Heart left ventricle (tissue), 16 donors: ENCODE measurements at regions of chr9 and their contacts with region 1.

Region 1: GRCh38 chr9:81609782-81610739 is 79.3 kb downstream of the TLE1 start:
- DNase-seq: no peak
- ATAC-seq: no peak
- H3K4me3 ChIP-seq: no peak overlapping the region
- H3K27ac ChIP-seq: peak overlapping the region in 1 of 12 donors; percentile 5
- H3K4me1 ChIP-seq: peaks cover 0 to 28% (median 11%) of the 10 kb centered on the region in 12 donors
- H3K27me3 ChIP-seq: no peaks in the 10 kb centered on the region
- CTCF ChIP-seq: no peak
- POLR2A ChIP-seq: no peak

Region 2: DNA sequence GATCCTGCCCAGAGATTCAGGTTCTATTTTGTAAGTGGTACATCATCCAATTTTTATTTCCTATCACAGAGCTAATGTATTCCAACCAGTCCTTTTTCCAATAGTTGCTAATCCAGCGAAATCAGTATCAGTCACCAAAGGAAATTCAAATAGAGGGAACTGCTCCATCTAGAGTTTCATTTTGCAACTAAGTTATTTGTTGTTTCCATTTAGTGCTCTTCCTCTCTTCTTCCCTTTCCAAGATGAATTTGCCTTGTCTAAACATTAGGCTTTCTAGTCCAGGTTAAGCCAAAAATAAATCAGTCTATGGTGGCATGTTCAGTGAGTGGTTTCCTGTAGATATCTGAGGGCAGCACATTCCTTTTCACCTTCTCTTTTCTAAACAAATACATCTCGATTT is 238.4 kb after region 1 on chr9:
- intact Hi-C with region 1: no loop called
- DNase-seq: no peak
- ATAC-seq: no peak
- H3K4me3 ChIP-seq: no peak overlapping the region
- H3K27ac ChIP-seq: no peak overlapping the region
- H3K4me1 ChIP-seq: peaks cover 0 to 16% (median 9%) of the 10 kb centered on the region in 12 donors
- H3K27me3 ChIP-seq: peaks cover 0 to 4% (median 0%) of the 10 kb centered on the region in 9 donors
- CTCF ChIP-seq: peak in 11 of 12 donors; percentile 17 to 60 (median 32)
- POLR2A ChIP-seq: no peak

Region 3: GRCh38 chr9:82488313-82489200 is 878.5 kb after region 1 on chr9:
- intact Hi-C with region 1: loop called in 1 of 10 experiments (anchors 10 kb)
- DNase-seq: peak in 3 of 5 donors; percentile 41 to 57 (median 55)
- ATAC-seq: peak; percentile 79 to 92 (median 86)
- H3K4me3 ChIP-seq: peak overlapping the region in 1 of 12 donors; percentile 1
- H3K27ac ChIP-seq: peak overlapping the region; percentile 64 to 86 (median 76)
- H3K4me1 ChIP-seq: peaks cover 0 to 31% (median 16%) of the 10 kb centered on the region in 12 donors
- H3K27me3 ChIP-seq: no peaks in the 10 kb centered on the region
- CTCF ChIP-seq: no peak
- POLR2A ChIP-seq: no peak